AG04449 (cell line): ENCODE measurements at regions of chr6 and their contacts with region 1.

Region 1: GRCh38 chr6:158718461-158719046 is 68.7 kb downstream of the SYTL3 start:
- DNase-seq: no peak
- H3K4me3 ChIP-seq: no peak overlapping the region
- CTCF ChIP-seq: peak; percentile 56

Region 2: GRCh38 chr6:158684745-158685324 is 33.7 kb before region 1 on chr6:
- CTCF ChIA-PET with region 1: no interaction called
- POLR2A ChIA-PET with region 1: no interaction called
- DNase-seq: no peak
- H3K4me3 ChIP-seq: no peak overlapping the region
- CTCF ChIP-seq: no peak

Region 3: DNA sequence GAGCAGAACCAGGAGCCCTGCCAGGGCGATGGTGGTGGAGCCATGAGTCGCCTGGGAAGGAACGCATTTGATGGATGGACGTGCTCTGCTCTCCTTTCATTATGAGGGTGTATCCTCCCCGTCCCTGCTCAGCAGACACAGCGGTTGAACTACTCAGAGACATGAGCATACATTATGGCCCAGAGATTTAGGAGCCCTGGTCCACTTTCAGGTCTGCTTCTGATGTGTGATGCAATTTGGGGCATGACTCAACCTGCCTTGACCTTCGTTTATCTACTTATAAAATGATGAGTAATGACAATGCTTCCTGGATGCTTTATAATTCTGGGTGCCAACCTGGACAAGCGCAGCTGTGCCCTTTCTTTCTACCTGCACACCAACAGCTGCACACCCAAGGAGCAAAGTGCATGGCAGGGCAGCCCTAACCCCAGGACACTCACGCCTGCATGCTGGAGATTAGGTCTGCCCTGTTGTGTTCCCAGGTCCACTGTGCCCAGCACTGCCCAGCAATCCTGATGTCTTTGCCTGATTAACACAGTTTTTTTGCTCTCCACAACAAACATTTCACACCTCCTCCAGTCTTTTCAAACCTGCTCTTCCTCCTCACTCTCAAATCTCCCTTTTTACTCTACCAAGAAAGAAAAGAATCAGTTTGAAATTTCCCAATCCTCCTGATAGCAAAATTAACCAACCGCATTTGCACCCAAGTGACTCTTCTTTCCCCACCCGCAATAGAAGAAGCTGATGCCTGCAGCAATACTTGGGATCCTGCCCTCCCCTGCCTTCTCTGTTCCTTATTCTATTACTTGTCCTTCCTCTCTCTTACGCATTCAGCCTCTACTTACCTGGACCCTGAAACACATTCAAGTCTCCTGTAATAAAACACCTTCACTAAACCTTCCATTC is 19.4 kb after region 1 on chr6:
- CTCF ChIA-PET with region 1: interaction called, 10 read pairs
- POLR2A ChIA-PET with region 1: no interaction called
- DNase-seq: no peak
- H3K4me3 ChIP-seq: no peak overlapping the region
- CTCF ChIP-seq: no peak